ENCODE measurements at regions of chr2 and their contacts with region 1.

Region 1: GRCh38 chr2:239267288-239267951 is 133.4 kb downstream of the HDAC4 start:
- DNase-seq: peak; percentile 97
- ATAC-seq: peak; percentile 84
- H3K4me3 Mint-ChIP-seq: peak overlapping the region; percentile 86
- H3K27ac Mint-ChIP-seq: peak overlapping the region; percentile 93
- H3K4me1 Mint-ChIP-seq: peaks cover 86% of the 10 kb centered on the region
- H3K27me3 Mint-ChIP-seq: no peaks in the 10 kb centered on the region

Region 2: GRCh38 chr2:239216614-239217273 is 50.7 kb before region 1 on chr2:
- CTCF ChIA-PET with region 1: interaction called, 4 read pairs
- POLR2A ChIA-PET with region 1: interaction called, 13 read pairs
- DNase-seq: peak; percentile 43
- ATAC-seq: peak; percentile 84
- H3K4me3 Mint-ChIP-seq: peak overlapping the region; percentile 58
- H3K27ac Mint-ChIP-seq: peak overlapping the region; percentile 92
- H3K4me1 Mint-ChIP-seq: peaks cover 60% of the 10 kb centered on the region
- H3K27me3 Mint-ChIP-seq: no peaks in the 10 kb centered on the region

Region 3: GRCh38 chr2:239298116-239298804 is 30.8 kb after region 1 on chr2:
- CTCF ChIA-PET with region 1: interaction called, 37 read pairs
- POLR2A ChIA-PET with region 1: interaction called, 15 read pairs
- DNase-seq: peak; percentile 87
- ATAC-seq: peak; percentile 91
- H3K4me3 Mint-ChIP-seq: peak overlapping the region; percentile 79
- H3K27ac Mint-ChIP-seq: peak overlapping the region; percentile 90
- H3K4me1 Mint-ChIP-seq: peaks cover 73% of the 10 kb centered on the region
- H3K27me3 Mint-ChIP-seq: no peaks in the 10 kb centered on the region

Region 4: GRCh38 chr2:239380831-239381708 is 113.7 kb after region 1 on chr2:
- CTCF ChIA-PET with region 1: interaction called, 15 read pairs
- POLR2A ChIA-PET with region 1: no interaction called
- DNase-seq: peak; percentile 74
- ATAC-seq: peak; percentile 83
- H3K4me3 Mint-ChIP-seq: peak overlapping the region; percentile 73
- H3K27ac Mint-ChIP-seq: peak overlapping the region; percentile 79
- H3K4me1 Mint-ChIP-seq: peaks cover 21% of the 10 kb centered on the region
- H3K27me3 Mint-ChIP-seq: no peaks in the 10 kb centered on the region